Activated B cell treated with CpG ODN at 0.5 μM for 24 hours (primary cell): ENCODE measurements at regions of chr19 and their contacts with region 1.

Region 1: GRCh38 chr19:17170538-17171297 is 44.4 kb upstream of the USE1 start:
- DNase-seq: no peak
- ATAC-seq: peak; percentile 89
- H3K4me3 Mint-ChIP-seq: peak overlapping the region; percentile 56
- H3K27ac Mint-ChIP-seq: peak overlapping the region; percentile 89
- H3K4me1 Mint-ChIP-seq: peaks cover 16% of the 10 kb centered on the region
- H3K27me3 Mint-ChIP-seq: no peaks in the 10 kb centered on the region
- CTCF ChIP-seq: no peak

Region 2: DNA sequence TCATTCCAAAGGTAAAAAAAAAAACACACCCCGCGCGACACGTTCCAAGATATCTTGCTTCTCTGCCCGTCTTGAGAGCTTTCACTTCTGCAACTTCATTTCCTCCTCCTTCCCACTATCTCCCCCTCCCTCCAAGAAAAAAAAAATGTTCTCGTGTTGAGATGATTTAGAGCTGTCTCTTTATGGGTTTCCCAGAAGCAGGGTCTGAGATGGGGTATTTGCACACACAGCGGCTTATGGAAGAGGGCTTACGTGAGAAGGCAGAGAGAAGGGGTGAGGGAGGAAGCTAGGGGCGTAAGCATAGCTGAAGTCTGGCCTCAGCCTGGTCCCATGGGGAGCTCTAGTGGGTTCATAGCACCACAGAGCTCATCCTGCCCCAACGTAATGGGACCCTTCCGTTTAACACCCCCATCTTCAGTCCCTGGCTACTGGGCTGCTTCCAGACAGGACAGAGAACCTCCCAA is 13.2 kb after region 1 on chr19:
- CTCF ChIA-PET with region 1: no interaction called
- POLR2A ChIA-PET with region 1: interaction called, 25 read pairs
- intact Hi-C with region 1: loop called (anchors 1 kb)
- DNase-seq: peak; percentile 42
- ATAC-seq: peak; percentile 85
- H3K4me3 Mint-ChIP-seq: peak overlapping the region; percentile 79
- H3K27ac Mint-ChIP-seq: peak overlapping the region; percentile 99
- H3K4me1 Mint-ChIP-seq: peaks cover 32% of the 10 kb centered on the region
- H3K27me3 Mint-ChIP-seq: no peaks in the 10 kb centered on the region
- CTCF ChIP-seq: no peak